B cell (primary cell): ENCODE measurements at regions of chr6 and their contacts with region 1.

Region 1: GRCh38 chr6:116570856-116571682 is at the start of gene RWDD1:
- DNase-seq: peak; percentile 99
- ATAC-seq: peak; percentile 93
- H3K4me3 ChIP-seq: peak within 1 kb of the TSS; percentile 81 to 93 (median 83)
- H3K4me3 Mint-ChIP-seq: peak within 1 kb of the TSS; percentile 97
- H3K27ac ChIP-seq: peak within 1 kb of the TSS; percentile 93 to 96
- H3K27ac Mint-ChIP-seq: peak within 1 kb of the TSS; percentile 97
- H3K4me1 ChIP-seq: peaks cover 24% of the 10 kb centered on the region in 2 donors
- H3K4me1 Mint-ChIP-seq: peaks cover 40% of the 10 kb centered on the region
- H3K27me3 ChIP-seq: no peaks in the 10 kb centered on the region
- H3K27me3 Mint-ChIP-seq: no peaks in the 10 kb centered on the region
- CTCF ChIP-seq: no peak
- total RNA-seq, gene RWDD1: 21.8 and 22.4 TPM in 2 replicates

Region 2: GRCh38 chr6:116253505-116254296 is 317.4 kb before region 1 on chr6 and contains the start of gene TSPYL4:
- CTCF ChIA-PET with region 1: interaction called, 3 read pairs
- POLR2A ChIA-PET with region 1: interaction called, 11 read pairs
- intact Hi-C with region 1: loop called (anchors 1 kb)
- DNase-seq: peak; percentile 95
- ATAC-seq: peak; percentile 99
- H3K4me3 ChIP-seq: peak within 1 kb of the TSS; percentile 85 to 99 (median 98)
- H3K4me3 Mint-ChIP-seq: no peak within 1 kb of the TSS
- H3K27ac ChIP-seq: peak within 1 kb of the TSS; percentile 94 to 98
- H3K27ac Mint-ChIP-seq: no peak within 1 kb of the TSS
- H3K4me1 ChIP-seq: peaks cover 31 to 36% of the 10 kb centered on the region in 2 donors
- H3K4me1 Mint-ChIP-seq: peaks cover 35% of the 10 kb centered on the region
- H3K27me3 ChIP-seq: no peaks in the 10 kb centered on the region
- H3K27me3 Mint-ChIP-seq: no peaks in the 10 kb centered on the region
- CTCF ChIP-seq: no peak
- total RNA-seq, gene TSPYL4: 20.5 and 20.6 TPM in 2 replicates

Region 3: DNA sequence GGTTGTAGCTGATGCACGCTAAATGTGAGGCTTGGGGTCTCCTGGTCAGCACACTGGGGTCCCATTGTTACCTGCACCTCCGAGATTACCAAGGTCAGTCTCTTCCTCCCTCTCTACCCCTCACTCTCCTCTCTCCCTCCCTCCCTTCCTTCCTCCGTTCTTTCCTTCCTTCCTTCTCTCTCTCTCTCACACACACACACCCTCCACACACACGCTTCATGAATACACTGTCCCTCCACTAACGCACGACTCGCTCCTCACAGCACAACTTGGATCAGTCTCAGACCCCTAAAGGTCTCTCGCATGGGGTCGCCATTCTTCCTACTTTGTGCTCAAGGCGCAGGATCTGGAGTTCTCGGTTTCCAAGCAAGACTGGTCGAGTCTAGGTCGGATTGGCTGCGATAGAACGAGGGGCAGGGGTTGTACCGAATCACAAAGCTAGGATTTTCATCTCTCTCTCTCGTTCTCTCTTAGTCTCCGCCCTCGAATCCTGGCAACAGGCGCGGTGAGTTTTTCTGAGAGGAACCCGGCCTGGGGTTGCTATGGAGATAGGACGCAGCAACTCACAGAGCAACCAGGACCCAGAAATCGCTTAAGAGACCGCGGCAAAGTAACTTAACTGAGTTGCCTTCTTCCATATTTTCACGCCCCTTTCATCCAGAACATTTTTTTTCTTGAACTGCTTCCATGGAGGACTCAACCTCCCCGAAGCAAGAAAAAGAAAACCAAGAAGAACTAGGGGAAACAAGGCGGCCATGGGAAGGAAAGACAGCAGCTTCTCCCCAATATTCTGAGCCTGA is 45.1 kb after region 1 on chr6 and contains the start of gene RSPH4A:
- CTCF ChIA-PET with region 1: interaction called, 3 read pairs
- POLR2A ChIA-PET with region 1: no interaction called
- intact Hi-C with region 1: loop called (anchors 1 kb)
- DNase-seq: peak; percentile 80
- ATAC-seq: peak; percentile 92
- H3K4me3 ChIP-seq: peak within 1 kb of the TSS; percentile 37 to 70 (median 56)
- H3K4me3 Mint-ChIP-seq: peak within 1 kb of the TSS; percentile 84
- H3K27ac ChIP-seq: no peak within 1 kb of the TSS
- H3K27ac Mint-ChIP-seq: peak within 1 kb of the TSS; percentile 44
- H3K4me1 ChIP-seq: peaks cover 13 to 15% of the 10 kb centered on the region in 2 donors
- H3K4me1 Mint-ChIP-seq: peaks cover 13% of the 10 kb centered on the region
- H3K27me3 ChIP-seq: peaks cover 0 to 24% (median 5%) of the 10 kb centered on the region in 4 experiments
- H3K27me3 Mint-ChIP-seq: peaks cover 10% of the 10 kb centered on the region
- CTCF ChIP-seq: no peak
- total RNA-seq, gene RSPH4A: 0.69 and 0.83 TPM in 2 replicates

Region 4: GRCh38 chr6:116667623-116668022 is 96.6 kb after region 1 on chr6:
- CTCF ChIA-PET with region 1: interaction called, 3 read pairs
- POLR2A ChIA-PET with region 1: no interaction called
- intact Hi-C with region 1: loop called (anchors 1 kb)
- DNase-seq: peak; percentile 76
- ATAC-seq: peak; percentile 52
- H3K4me3 ChIP-seq: peak overlapping the region; percentile 73 to 96 (median 91)
- H3K4me3 Mint-ChIP-seq: peak overlapping the region; percentile 100
- H3K27ac ChIP-seq: peak overlapping the region; percentile 88 to 92
- H3K27ac Mint-ChIP-seq: peak overlapping the region; percentile 61
- H3K4me1 ChIP-seq: peaks cover 15 to 26% of the 10 kb centered on the region in 2 donors
- H3K4me1 Mint-ChIP-seq: peaks cover 36% of the 10 kb centered on the region
- H3K27me3 ChIP-seq: no peaks in the 10 kb centered on the region
- H3K27me3 Mint-ChIP-seq: peaks cover 11% of the 10 kb centered on the region
- CTCF ChIP-seq: no peak